H1 (cell line): ENCODE measurements at regions of chr1 and their contacts with region 1.

Region 1: DNA sequence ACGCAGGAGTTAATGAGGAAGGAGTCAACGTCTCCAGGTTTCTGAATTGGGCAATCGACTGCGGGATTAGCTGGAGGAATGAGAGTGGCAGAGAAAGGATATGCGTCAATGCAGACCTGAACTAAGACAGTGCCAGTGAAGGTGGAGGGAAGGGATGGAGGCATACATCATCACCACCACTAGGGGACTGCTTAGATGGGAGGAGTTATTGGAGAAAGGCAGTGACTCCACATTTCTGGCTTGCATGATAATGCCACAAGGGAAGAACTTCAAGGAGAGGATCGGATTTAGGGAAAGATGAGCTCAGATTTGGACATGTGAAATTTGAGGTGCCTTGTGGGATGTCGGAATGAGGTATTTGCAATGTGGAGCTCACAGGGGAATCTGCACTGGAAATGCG is 17.5 kb downstream of the VASH2 start:
- DNase-seq: peak in 1 of 2 experiments; percentile 61
- H3K4me3 ChIP-seq: no peak overlapping the region
- H3K27ac ChIP-seq: peak overlapping the region; percentile 20
- H3K4me1 ChIP-seq: peaks cover 0 to 20% (median 8%) of the 10 kb centered on the region in 4 experiments; a peak in 5 of 7 replicates
- H3K27me3 ChIP-seq: no peaks in the 10 kb centered on the region
- CTCF ChIP-seq: peak; percentile 54 to 96 (median 65)
- EP300 ChIP-seq: no peak
- POLR2A ChIP-seq: peak; percentile 52 to 65
- RAD21 ChIP-seq: peak; percentile 28 to 42

Region 2: DNA sequence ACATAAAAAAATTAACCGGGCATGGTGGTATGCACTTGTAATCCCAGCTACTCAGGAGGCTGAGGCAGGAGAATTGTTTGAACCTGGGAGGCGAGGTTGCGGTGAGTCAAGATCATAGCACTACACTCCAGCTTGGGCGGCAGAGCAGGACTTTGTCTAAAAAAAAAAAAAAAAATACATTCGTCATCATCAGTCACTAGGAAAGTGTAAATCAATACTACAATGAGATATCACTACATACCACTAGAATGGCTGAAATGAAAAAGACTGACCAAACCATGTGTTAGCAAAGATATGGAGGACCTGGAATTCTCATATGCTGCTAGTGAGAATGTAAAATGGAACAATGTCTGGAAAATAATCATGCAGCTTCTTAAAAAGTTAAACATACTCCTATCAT is 129.7 kb before region 1 on chr1:
- CTCF ChIA-PET with region 1: no interaction called
- POLR2A ChIA-PET with region 1: no interaction called
- DNase-seq: no peak
- H3K4me3 ChIP-seq: no peak overlapping the region
- H3K27ac ChIP-seq: no peak overlapping the region
- H3K4me1 ChIP-seq: no peaks in the 10 kb centered on the region
- H3K27me3 ChIP-seq: no peaks in the 10 kb centered on the region
- CTCF ChIP-seq: no peak
- EP300 ChIP-seq: no peak
- POLR2A ChIP-seq: no peak
- RAD21 ChIP-seq: no peak

Region 3: DNA sequence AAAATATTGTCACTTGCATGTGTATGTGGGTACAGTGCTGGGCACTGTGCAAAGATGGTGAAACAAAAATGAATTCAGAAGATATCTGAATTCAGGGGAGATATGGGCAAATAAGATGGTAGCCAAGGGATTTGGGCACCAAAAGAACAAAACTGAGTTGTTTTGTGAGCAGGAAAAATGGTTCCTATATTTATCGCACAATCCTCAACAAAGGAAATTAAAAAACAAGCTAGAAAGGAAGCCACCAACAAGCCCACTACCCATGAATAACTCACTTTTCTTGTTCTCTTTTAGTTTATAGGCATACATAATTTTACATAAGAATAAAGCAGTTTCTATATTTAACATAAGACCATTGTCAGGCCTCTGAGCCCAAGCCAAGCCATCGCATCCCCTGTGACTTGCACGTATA is 58.1 kb before region 1 on chr1:
- CTCF ChIA-PET with region 1: no interaction called
- POLR2A ChIA-PET with region 1: interaction called, 12 read pairs
- DNase-seq: peak in 1 of 2 experiments; percentile 73
- H3K4me3 ChIP-seq: peak overlapping the region in 3 of 4 experiments; percentile 3 to 49 (median 13); a peak in 4 of 8 replicates
- H3K27ac ChIP-seq: peak overlapping the region; percentile 91
- H3K4me1 ChIP-seq: peaks cover 5 to 18% (median 14%) of the 10 kb centered on the region in 4 experiments; a peak in 6 of 7 replicates
- H3K27me3 ChIP-seq: no peaks in the 10 kb centered on the region
- CTCF ChIP-seq: no peak
- EP300 ChIP-seq: no peak
- POLR2A ChIP-seq: peak in 1 of 2 experiments; percentile 44; a peak in 1 of 3 replicates
- RAD21 ChIP-seq: no peak

Region 4: GRCh38 chr1:212928323-212929291 is 39.2 kb before region 1 on chr1:
- CTCF ChIA-PET with region 1: interaction called, 29 read pairs
- POLR2A ChIA-PET with region 1: interaction called, 10 read pairs
- DNase-seq: peak in 1 of 2 experiments; percentile 54
- H3K4me3 ChIP-seq: peak overlapping the region in 1 of 4 experiments; percentile 16; a peak in 1 of 8 replicates
- H3K27ac ChIP-seq: peak overlapping the region; percentile 5; the same call in 1 of the 2 replicates
- H3K4me1 ChIP-seq: peaks cover 9 to 20% (median 14%) of the 10 kb centered on the region in 4 experiments
- H3K27me3 ChIP-seq: no peaks in the 10 kb centered on the region
- CTCF ChIP-seq: no peak
- EP300 ChIP-seq: no peak
- POLR2A ChIP-seq: no peak
- RAD21 ChIP-seq: no peak

Region 5: DNA sequence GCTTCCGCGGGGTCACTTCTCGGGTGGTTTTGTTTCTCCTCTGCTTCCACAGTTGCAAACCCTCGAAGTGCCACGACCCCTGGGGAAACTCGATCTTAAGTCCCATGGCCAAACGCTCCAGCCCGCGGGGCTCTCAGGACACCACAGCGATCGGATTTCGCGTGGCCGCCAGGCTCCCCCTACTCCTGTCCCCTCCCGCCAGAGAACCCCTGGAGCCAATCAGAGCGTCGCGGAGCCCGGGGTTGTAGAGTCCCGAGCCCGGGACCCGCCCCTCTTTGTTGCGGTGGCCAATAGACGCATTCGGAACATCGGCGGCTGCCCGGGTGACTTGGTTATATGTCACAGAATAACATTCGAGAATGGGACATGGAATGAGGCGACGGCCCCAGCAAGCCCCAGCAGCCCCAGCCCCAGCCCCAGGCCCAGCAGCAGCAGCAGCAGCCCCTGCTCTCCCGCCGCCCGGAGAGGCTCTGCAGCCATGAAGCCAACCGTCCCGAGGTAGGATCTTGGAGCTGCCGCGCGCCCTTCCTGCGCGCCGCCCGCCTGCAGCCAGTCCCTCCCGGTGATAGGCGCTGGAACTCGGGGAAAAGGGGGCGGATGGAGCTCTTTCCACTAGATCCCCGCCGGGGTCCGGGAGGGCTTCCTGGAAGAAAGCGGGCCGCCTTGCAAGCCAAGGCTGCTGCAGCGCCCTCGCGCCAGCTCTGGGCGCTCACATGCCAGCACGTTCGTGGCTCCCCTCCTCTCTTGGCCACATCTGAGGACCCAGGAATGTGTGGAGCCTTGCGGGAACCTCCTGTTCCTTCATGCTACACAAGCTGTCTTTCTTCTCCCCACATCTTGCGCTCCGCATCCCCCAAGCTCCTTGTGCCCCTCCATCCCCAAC is 17.3 kb before region 1 on chr1 and contains the start of gene VASH2:
- CTCF ChIA-PET with region 1: interaction called, 52 read pairs
- POLR2A ChIA-PET with region 1: interaction called, 172 read pairs
- DNase-seq: peak; percentile 47 to 89
- H3K4me3 ChIP-seq: peak within 1 kb of the TSS; percentile 55 to 95 (median 94)
- H3K27ac ChIP-seq: no peak within 1 kb of the TSS
- H3K4me1 ChIP-seq: peaks cover 3 to 15% (median 11%) of the 10 kb centered on the region in 4 experiments
- H3K27me3 ChIP-seq: peaks cover 0 to 4% (median 0%) of the 10 kb centered on the region in 4 experiments; a peak in 1 of 7 replicates
- CTCF ChIP-seq: no peak
- EP300 ChIP-seq: no peak
- POLR2A ChIP-seq: peak in 1 of 2 experiments; percentile 31; a peak in 1 of 3 replicates
- RAD21 ChIP-seq: no peak
- total RNA-seq, gene VASH2: 184 and 187 TPM in 2 replicates

Region 6: DNA sequence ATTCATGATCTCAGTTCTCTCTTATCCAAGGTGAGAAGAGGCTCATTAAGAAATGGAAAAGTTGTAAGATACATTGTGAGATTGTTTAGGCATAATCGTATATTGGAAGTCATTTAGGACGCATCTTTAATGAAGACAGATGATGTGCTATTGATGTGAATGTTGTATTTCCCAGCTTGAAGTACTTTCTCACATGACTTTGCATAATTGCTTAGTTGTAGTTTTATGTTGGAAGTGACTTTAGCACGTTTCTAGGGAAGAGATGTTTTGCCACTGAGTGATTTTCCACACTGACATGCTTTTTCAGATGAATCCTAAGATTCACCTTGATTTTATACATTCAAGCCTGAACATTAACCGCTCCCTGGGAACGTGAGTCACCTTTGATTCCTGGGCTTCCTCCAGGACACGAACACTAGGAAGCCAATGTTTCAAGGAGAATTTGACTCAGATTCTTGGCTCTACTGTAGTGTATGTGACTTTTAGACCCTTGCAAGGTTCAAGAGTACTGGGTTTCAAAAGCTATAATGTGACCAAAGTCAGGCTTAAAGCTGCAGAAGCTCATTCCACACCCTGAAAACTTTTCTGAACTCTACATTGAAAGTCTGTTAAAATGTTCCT is 20.0 kb after region 1 on chr1:
- CTCF ChIA-PET with region 1: interaction called, 64 read pairs
- POLR2A ChIA-PET with region 1: interaction called, 240 read pairs
- DNase-seq: no peak
- H3K4me3 ChIP-seq: no peak overlapping the region
- H3K27ac ChIP-seq: no peak overlapping the region
- H3K4me1 ChIP-seq: no peaks in the 10 kb centered on the region
- H3K27me3 ChIP-seq: no peaks in the 10 kb centered on the region
- CTCF ChIP-seq: no peak
- EP300 ChIP-seq: no peak
- POLR2A ChIP-seq: 0 out of 3 replicates have a peak, but pooled peaks of 1 of the 2 experiments have one; percentile 56
- RAD21 ChIP-seq: no peak